ENCODE measurements at regions of chr2 and their contacts with region 1.

Region 1: DNA sequence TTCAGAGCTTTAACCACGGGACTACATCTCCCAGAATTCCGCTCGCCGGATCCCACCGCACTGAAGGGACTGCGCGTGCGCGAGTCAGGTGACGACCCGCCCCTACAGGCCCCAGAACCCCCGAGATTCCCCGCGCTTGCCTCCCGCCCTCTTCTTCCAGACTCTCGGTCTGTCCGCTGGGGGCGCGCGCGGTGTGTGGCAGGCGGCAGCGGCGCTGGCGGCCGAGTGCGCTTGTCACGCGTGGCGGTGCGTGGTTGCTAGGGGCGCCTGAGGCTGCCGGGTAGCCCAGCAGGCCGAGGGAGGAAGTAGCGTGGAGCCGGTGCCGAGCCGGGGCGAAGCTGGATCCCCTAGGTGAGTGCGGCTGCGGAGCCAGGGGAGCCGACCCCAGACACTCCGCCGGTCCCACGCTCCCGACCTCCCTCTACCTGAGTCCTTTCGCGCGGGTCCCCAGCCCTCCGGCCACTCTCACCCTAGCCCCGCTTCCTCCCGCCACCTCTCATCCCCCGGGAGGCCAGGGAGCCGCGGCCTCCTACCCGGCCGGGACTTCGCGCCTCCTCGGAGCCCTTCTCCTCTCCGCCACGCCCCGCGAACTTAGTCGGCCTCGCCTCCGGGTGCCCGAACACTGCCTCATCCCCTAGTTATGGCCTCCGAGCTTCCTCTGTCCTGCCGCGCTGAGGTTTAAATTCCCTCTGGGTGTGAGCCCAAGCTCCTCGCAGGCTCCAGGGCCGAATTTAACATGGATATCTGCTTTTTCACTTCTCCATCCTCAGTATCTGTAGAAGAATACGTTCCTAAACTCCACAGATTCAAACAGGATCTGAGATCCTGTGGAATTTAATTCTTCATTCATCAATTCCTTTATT is at the start of gene TTLL4:
- DNase-seq: peak; percentile 99
- H3K4me3 Mint-ChIP-seq: peak within 1 kb of the TSS; percentile 94
- H3K27ac Mint-ChIP-seq: peak within 1 kb of the TSS; percentile 87
- H3K4me1 Mint-ChIP-seq: peaks cover 27% of the 10 kb centered on the region
- H3K27me3 Mint-ChIP-seq: peaks cover 12% of the 10 kb centered on the region
- total RNA-seq, gene TTLL4: 70.6 and 78.3 TPM in 2 replicates

Region 2: GRCh38 chr2:218202266-218202665 is 508.7 kb before region 1 on chr2:
- intact Hi-C with region 1: no loop called
- DNase-seq: no peak
- H3K4me3 Mint-ChIP-seq: no peak overlapping the region
- H3K27ac Mint-ChIP-seq: no peak overlapping the region
- H3K4me1 Mint-ChIP-seq: no peaks in the 10 kb centered on the region
- H3K27me3 Mint-ChIP-seq: peaks cover 25% of the 10 kb centered on the region

Region 3: DNA sequence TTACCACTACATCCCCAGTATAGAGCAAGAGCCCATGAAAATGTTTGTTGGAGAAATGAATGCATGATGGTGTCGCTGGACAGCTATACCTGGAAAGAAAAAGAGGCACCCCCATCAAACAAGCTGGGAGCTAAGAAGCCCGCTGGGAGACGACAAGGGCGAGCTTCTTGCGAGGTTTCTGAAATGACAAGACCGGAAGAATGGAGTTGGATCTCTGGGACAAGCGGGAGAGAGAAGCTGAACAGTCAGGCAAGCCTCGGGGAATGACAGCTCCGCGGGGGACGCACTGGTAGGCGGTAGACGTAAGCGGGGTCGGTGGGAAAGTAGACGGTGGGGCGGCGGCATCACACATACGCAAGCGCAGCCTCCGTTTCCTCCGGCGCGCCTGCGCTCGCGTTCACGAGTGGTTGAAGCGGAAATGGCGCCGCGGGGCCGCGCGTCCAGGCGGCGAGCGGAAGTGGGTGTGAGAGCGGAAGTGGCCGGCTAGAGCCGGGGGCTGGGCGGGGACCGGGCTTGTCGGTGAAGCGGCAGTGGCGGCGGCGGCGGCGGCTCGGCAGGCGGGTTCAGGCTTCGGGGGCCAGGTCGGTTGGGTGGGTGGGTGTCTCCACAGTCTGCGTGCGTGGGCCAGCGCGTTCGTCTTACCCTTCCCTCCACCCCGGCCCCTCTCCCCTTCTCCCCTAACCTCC is 494.1 kb before region 1 on chr2 and contains the start of gene ARPC2:
- intact Hi-C with region 1: loop called (anchors 5 kb)
- DNase-seq: peak; percentile 96
- H3K4me3 Mint-ChIP-seq: peak within 1 kb of the TSS; percentile 91
- H3K27ac Mint-ChIP-seq: peak within 1 kb of the TSS; percentile 95
- H3K4me1 Mint-ChIP-seq: peaks cover 36% of the 10 kb centered on the region
- H3K27me3 Mint-ChIP-seq: no peaks in the 10 kb centered on the region
- total RNA-seq, gene ARPC2: 507 and 509 TPM in 2 replicates

Region 4: DNA sequence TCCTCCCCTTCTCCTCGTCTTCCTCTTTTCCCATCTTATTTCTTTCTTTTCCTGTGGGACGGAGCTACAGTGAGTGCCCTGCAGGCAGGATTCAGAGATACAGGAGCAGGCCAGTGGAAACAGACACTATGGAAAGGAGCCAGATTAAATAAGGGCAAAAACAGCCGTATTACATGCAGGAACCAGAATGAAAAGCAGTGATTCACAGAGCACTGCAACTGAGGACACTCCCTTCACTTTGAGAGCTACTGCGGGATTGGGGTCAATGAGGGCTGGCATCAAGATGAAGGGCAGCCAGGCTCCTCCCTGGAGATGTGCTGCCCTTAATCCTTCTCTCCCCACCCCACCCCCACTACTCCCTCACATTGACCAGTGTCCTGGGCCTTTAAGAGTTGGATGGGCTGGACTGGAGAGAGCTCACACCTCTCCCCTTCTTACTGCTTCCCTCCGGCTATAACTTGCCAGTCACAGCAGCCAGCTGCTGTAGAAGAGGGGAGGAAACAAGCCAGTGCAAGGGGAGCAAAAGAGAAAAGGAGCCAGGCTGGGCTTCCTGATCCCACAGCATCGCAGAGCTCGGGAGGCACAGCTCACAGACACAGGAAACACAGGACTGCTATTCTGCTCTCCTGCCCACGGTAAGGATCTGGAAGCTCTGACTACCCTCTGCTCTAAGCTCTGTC is 103.3 kb before region 1 on chr2 and contains the start of gene PLCD4:
- intact Hi-C with region 1: no loop called
- DNase-seq: no peak
- H3K4me3 Mint-ChIP-seq: no peak within 1 kb of the TSS
- H3K27ac Mint-ChIP-seq: no peak within 1 kb of the TSS
- H3K4me1 Mint-ChIP-seq: no peaks in the 10 kb centered on the region
- H3K27me3 Mint-ChIP-seq: peaks cover 10% of the 10 kb centered on the region
- total RNA-seq, gene PLCD4: 0.54 and 0.62 TPM in 2 replicates

Region 5: DNA sequence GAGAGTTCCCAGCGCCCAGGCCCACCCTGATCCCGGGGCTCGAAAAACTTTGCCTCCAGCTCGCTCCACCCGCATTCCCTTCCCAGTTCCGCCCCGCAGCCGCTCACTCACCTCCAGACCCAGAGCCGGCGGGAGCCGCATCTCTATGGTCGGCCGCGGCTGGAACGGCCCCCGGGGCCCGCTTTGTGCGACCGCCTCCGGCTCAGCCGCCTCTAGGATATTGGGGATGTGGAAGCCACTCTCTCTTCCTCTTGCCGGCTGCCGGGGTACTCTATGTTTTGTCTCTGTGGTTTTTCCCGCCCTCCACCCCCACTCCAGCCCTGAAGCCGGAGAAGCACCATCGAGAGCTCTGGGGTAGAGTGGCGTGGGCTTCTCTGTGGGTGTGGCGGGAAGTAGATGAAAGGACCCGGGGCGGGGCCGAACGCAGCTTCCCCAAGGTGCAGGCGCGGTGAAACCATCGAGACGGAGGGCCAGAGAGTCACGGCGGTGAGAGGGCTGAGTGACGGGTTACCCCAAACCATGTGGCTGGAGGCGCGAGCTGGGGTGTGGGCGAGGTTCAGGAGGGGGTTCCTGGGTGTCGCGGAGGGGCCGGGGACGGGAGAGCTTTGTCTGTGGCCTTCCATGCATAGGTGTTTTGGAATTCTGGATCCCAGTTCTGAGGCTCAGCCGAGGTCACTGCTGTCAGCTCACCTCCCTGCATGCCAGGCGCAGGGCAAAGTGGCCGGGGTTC is 51.5 kb before region 1 on chr2 and contains the starts of genes BCS1L and ZNF142:
- intact Hi-C with region 1: loop called (anchors 1 kb)
- DNase-seq: peak; percentile 92
- H3K4me3 Mint-ChIP-seq: peak within 1 kb of the TSS; percentile 99
- H3K27ac Mint-ChIP-seq: peak within 1 kb of the TSS; percentile 97
- H3K4me1 Mint-ChIP-seq: peaks cover 29% of the 10 kb centered on the region
- H3K27me3 Mint-ChIP-seq: no peaks in the 10 kb centered on the region
- total RNA-seq, gene BCS1L: 85.1 and 85.3 TPM in 2 replicates
- total RNA-seq, gene ZNF142: 61.8 and 64.4 TPM in 2 replicates

Region 6: DNA sequence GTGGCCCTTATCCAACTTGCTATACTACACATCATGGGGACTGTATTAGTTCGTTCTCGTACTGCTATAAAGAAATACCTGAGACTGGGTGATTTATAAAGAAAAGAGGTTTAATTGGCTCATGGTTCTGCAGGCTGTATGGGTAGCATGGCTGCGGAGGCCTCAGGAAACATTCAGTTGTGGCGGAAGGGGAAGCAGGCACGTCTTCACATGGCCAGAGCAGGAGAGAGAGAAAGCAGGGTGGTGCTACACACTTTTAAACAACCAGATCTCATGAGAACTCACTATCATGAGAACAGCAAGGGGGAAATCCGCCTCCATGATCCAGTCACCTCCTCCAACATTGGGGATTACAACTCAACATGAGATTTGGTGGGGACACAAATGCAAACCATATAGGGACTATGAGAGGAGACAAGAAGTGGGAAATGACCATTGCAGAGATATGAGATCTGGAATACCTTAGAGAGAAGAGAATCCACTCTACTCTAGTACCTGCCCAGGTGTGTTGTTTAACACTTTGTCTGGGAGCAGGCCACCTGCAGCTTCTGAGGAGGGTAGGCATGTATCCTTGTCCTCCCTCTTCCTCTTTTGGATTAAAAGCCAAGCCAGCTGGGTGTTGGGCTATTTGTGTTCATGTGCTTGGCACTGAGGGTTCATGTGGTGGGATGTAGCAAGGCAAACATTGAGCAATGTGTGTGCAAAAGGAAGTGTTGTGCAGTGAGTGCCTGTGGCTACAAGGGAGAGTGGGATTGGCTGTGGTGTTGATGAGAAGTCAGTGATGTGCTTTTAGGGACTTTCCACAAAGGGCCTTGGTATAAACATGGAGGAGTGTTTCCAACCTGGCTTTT is 22.5 kb after region 1 on chr2:
- intact Hi-C with region 1: loop called (anchors 2 kb)
- DNase-seq: peak; percentile 44
- H3K4me3 Mint-ChIP-seq: peak overlapping the region; percentile 15
- H3K27ac Mint-ChIP-seq: peak overlapping the region; percentile 76
- H3K4me1 Mint-ChIP-seq: peaks cover 35% of the 10 kb centered on the region
- H3K27me3 Mint-ChIP-seq: no peaks in the 10 kb centered on the region

Region 7: DNA sequence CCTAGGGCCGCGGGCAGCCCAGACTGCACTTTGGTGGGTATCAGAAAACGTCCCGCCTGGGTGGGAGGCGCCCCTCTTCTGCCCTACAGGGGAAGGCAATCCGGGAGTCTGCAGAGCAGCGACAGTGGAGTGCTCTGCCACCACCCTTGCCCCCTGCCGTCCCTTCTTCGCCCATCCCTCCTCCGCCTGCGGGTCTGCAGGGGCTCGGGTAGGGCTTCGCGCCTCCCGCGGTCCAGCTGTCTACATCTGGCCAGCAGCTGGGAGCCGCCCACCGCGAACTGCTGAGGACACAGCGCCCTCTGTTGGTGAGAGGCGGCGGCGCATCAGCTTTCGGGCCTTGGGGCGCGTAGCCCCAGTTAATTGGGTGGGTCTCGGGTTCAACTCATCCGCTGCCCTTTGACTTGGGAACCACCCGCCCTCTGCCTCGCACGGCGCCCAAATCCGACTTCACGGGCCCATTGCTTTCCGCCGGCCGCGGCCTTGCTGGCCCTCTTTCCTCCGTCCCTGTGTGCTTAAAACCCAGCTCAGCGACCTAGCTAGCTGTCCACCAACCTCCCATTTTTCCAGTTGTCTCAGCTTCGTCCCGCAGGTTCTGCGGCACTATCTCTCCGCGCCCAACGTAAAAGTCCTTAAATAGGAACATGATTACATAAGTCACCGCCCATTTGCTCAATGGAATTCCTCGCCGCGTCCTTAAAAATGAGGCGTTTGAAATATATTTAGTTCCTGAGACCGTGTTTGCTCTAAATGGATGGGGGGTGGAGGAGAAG is 187.4 kb after region 1 on chr2:
- intact Hi-C with region 1: loop called (anchors 1 kb)
- DNase-seq: peak; percentile 71
- H3K4me3 Mint-ChIP-seq: peak overlapping the region; percentile 73
- H3K27ac Mint-ChIP-seq: peak overlapping the region; percentile 86
- H3K4me1 Mint-ChIP-seq: peaks cover 42% of the 10 kb centered on the region
- H3K27me3 Mint-ChIP-seq: peaks cover 56% of the 10 kb centered on the region

Region 8: GRCh38 chr2:219177552-219178376 is 466.8 kb after region 1 on chr2 and contains the start of gene RETREG2:
- intact Hi-C with region 1: loop called (anchors 2 kb)
- DNase-seq: peak; percentile 74
- H3K4me3 Mint-ChIP-seq: peak within 1 kb of the TSS; percentile 91
- H3K27ac Mint-ChIP-seq: peak within 1 kb of the TSS; percentile 96
- H3K4me1 Mint-ChIP-seq: peaks cover 72% of the 10 kb centered on the region
- H3K27me3 Mint-ChIP-seq: no peaks in the 10 kb centered on the region
- total RNA-seq, gene RETREG2: 58.4 and 61.5 TPM in 2 replicates

Region 9: DNA sequence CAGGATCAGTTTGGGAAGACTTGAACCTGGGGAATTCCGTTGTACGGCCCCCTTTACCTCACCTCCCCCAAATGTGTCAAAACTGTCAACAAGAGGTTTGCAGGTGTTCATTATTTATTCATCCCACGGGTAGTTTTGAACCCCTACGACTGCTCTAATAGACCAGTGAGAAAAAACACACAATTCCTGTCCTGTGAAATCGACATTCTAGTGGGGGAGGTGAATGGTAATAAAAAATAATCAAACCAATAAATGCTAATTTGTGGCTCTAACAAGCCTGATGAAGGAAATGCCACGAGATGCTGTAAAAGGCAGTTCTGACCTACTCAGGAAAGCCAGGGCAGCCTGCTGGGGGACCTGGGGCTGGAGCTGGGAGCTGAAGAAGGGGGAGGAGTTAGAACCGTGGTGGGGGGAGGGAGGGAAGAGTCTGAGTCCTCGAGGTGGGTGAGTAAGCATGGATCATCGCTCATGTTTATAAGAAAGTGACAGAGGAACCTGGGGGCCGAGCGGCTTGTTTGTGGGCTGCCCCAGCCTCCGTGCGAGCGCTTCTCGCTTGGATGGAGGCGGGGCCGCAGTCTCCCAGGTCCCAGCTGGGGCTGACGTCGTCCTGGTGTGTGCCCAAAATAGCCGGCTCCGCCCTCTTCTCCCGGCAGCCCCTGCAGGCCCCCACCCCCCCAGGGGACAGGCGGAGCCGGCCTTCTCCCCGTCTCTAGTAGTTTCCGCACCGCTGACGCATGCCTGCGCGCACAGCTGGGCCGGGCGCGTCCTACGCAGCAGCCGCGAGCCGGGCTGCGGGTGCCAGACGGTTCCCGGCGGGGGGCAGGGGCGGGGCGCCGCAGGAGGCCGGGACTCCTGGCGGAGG is 568.0 kb after region 1 on chr2 and contains the start of gene DNAJB2:
- intact Hi-C with region 1: loop called (anchors 1 kb)
- DNase-seq: peak; percentile 99
- H3K4me3 Mint-ChIP-seq: peak within 1 kb of the TSS; percentile 94
- H3K27ac Mint-ChIP-seq: peak within 1 kb of the TSS; percentile 99
- H3K4me1 Mint-ChIP-seq: peaks cover 45% of the 10 kb centered on the region
- H3K27me3 Mint-ChIP-seq: peaks cover under 1% of the 10 kb centered on the region
- total RNA-seq, gene DNAJB2: 40.8 and 45.3 TPM in 2 replicates

Measured in activated T-helper 1 cell treated with anti-CD3 and anti-CD28 coated beads, Interleukin-12 subunit alpha, Interleukin-12 subunit beta, Interleukin-2, Interleukin-4 antibody, amounts not matched to agents 30 ng/mL and 10 ng/mL and 1 ng/mL, durations not matched to agents 14 hours and 24 hours and 36 hours (primary cell).